ENCODE measurements at regions of chr5 and their contacts with region 1.

Region 1: GRCh38 chr5:139392678-139393496 is 2.0 kb downstream of the PROB1 start:
- DNase-seq: peak; percentile 82
- H3K4me3 ChIP-seq: peak overlapping the region; percentile 53
- H3K27ac ChIP-seq: peak overlapping the region; percentile 83
- H3K4me1 ChIP-seq: peaks cover 14% of the 10 kb centered on the region
- H3K27me3 ChIP-seq: peaks cover 6% of the 10 kb centered on the region
- CTCF ChIP-seq: peak; percentile 74

Region 2: DNA sequence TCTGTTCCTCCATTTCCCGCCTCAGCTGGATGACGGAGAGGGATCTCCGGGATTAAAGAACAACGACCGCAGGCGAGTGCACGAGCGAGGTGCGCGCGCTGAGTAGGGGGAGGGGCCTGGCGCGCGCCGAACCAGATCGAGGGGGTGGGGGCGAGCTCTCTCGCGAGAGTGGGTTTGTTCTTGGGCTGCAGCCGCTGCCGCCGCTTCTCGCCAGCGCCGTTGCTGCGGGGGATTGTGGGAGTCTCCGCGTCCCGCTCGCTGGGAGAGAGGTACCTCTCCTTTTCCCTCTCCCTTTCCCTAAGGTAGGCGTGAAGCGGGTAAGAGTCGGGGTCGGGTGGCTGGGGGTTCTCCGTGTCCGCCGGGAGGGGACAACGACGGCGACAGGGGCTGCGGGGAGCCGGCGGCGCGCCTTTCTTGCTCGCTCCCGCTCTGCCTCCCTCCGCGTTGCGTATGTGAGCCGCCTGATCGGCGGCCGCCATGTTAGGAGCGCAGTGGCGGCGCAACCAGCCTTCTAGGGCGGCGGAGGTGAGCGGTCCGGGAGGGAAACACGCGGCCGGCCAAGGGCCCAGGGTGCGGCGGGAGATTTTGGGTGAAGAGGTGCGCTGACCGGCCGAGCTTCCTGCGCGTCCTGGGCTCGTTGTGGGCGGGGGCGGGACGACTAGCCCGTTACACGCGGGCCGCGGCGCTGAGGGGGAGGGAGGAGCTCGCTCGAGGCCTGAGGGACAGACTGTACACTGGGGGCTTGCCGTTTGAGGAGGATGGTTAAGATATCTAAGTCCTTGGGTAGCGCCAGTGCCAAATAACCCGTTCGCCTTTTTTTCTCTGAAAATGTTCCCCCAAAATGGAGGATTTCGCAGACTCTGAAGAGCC is 99.1 kb before region 1 on chr5 and contains the start of gene MATR3:
- intact Hi-C with region 1: loop called (anchors 10 kb)
- DNase-seq: peak; percentile 96
- H3K4me3 ChIP-seq: peak within 1 kb of the TSS; percentile 85
- H3K27ac ChIP-seq: peak within 1 kb of the TSS; percentile 100
- H3K4me1 ChIP-seq: peaks cover 13% of the 10 kb centered on the region
- H3K27me3 ChIP-seq: no peaks in the 10 kb centered on the region
- CTCF ChIP-seq: no peak
- total RNA-seq, gene MATR3: 105 to 128 TPM

Region 3: GRCh38 chr5:139341650-139342422 is 51.1 kb before region 1 on chr5 and contains the start of gene PAIP2:
- intact Hi-C with region 1: loop called (anchors 5 kb)
- DNase-seq: peak; percentile 99
- H3K4me3 ChIP-seq: peak within 1 kb of the TSS; percentile 57
- H3K27ac ChIP-seq: peak within 1 kb of the TSS; percentile 84
- H3K4me1 ChIP-seq: peaks cover 10% of the 10 kb centered on the region
- H3K27me3 ChIP-seq: no peaks in the 10 kb centered on the region
- CTCF ChIP-seq: peak; percentile 60
- total RNA-seq, gene PAIP2: 39.4 to 49.7 TPM

Region 4: DNA sequence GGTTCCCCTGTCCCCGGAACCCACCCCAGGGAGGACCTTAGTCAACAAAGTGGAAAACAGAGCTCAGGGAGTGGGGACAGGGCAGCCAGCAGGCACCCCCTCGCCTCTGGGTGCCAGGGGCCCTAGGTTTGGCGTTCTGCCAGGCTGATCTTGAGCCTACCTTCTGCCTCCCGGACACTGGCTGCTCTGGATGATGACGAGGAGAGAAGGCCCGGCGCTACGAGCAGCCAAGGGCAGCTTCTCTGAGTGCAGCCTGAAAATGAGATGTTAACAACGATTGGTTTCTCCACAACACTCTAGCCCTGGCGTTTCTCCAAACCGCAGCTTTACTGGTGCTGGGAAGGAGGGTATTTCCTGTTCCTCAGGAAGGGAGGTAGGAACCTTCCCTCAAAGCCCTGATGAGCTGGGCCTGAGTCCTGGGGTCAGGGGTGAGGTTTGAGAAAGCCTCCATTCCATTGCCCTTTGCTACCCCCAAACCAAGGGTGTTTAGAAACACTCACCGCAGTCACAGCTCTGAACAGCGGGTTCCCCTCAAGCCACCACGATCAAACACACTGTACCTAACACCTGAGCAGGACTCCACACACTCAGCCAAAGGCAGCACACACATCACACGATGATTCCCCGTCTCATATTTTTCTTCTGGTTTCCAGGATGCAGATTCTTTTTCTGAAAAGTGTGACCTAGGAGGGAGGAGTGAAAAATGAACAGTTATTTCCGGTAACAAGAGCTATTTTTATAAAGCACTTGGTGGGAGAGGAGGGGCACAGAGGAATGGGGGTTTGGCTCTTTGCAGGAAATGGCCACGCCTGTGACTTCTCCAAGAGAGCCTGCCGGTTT is 89.4 kb after region 1 on chr5 and contains the start of gene STING1:
- intact Hi-C with region 1: no loop called
- DNase-seq: peak; percentile 94
- H3K4me3 ChIP-seq: peak within 1 kb of the TSS; percentile 46
- H3K27ac ChIP-seq: peak within 1 kb of the TSS; percentile 90
- H3K4me1 ChIP-seq: peaks cover 21% of the 10 kb centered on the region
- H3K27me3 ChIP-seq: no peaks in the 10 kb centered on the region
- CTCF ChIP-seq: no peak
- total RNA-seq, gene STING1: 49.0 to 49.2 TPM

Region 5: DNA sequence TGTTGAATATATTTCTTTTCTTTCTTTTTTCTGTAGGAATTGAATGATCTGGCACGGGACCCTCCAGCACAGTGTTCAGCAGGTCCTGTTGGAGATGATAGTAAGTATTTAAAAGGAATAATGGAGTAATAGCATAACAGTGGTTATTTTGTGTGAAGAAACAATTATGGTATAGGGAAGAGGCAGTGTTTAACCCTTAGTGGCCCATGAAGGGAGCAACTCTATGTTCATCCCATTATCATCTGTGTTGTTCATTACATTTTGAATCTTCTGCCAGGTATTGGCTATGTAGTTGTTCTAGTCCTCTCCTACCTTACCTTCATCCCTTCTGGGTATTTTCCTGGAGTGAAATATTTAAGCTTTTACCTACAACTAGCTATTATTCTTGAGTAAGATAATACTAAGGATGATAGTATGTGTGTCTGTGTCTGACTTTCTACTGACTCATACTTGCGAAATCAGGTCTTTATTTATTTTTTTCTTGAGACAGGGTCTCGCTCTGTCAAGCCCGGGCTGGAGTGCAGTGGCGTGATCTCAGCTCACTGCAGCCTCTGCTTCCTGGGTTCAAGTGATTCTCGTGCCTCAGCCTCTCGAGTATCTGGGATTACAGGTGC is 207.6 kb after region 1 on chr5:
- intact Hi-C with region 1: no loop called
- DNase-seq: no peak
- H3K4me3 ChIP-seq: no peak overlapping the region
- H3K27ac ChIP-seq: no peak overlapping the region
- H3K4me1 ChIP-seq: no peaks in the 10 kb centered on the region
- H3K27me3 ChIP-seq: no peaks in the 10 kb centered on the region
- CTCF ChIP-seq: no peak

Measured in colonic mucosa (tissue), 4 donors.